WTC11 (cell line): ENCODE measurements at regions of chr10 and their contacts with region 1.

Region 1: DNA sequence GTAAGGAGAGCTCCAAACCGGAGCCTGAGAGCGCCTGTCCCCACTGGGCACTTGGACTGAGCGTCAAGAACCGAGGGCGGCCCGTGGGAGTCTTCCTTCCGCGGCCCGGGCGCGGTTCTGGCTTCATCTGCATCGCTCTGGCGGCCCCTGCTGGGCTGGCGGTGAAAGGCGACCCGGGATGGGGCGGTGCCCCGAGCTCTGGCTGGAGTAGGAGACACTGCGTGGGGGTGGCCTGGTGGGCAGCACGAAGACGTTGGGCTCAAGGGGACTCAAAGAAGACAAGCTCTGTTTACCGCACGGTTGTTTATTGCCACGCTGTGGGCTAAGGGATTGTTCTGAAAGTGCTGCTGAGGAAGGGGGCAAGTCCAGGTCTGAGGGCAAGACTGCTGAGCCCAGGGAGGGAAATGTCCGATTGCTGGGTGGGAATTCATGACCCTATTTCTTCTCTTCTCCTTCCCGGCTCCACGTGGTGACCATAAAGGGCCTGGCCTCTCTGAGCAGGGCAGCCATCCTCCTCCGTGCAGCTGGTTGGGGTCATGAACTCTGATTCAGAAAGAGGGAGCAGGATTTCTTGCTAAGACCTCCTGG is 29.8 kb downstream of the PLAU start:
- DNase-seq: peak; percentile 89
- ATAC-seq: peak; percentile 98
- H3K4me3 Mint-ChIP-seq: peak overlapping the region; percentile 33
- H3K27ac Mint-ChIP-seq: no peak overlapping the region
- H3K4me1 Mint-ChIP-seq: peaks cover 10% of the 10 kb centered on the region
- H3K27me3 Mint-ChIP-seq: peaks cover 7% of the 10 kb centered on the region
- CTCF ChIP-seq: peak; percentile 53

Region 2: DNA sequence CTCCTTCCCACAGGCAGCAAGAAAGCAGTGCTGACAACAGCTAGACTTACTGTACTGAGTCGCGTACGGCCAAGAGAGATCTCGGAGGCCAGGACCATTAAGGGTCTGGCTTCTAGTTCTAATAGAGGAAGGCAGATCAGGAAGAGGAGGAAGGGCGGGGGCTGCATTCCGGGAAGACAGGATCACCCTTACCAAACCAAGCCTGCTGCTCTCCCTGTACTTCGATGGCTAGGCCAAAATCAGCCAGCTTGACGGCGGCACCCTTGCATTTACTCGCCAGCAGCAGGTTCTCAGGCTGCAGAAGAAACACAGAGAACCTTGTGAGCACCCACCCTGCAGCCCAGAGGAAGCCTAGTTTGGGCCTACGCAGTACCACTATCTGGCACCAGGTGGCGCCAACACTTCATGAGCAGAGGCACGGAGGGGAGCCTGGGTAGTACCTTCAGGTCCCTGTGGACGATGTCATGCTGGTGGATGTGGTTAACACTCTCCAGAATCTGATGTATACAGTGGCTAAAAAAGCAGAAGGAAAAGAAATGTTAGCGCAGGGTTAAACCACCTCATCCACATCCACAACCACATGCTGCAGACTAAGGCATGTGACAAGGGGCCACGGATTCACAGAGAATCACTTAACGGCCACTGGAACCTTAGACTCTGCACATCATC is 91.8 kb before region 1 on chr10:
- CTCF ChIA-PET with region 1: interaction called, 25 read pairs
- POLR2A ChIA-PET with region 1: no interaction called
- DNase-seq: peak; percentile 93
- ATAC-seq: peak; percentile 91
- H3K4me3 Mint-ChIP-seq: no peak overlapping the region
- H3K27ac Mint-ChIP-seq: no peak overlapping the region
- H3K4me1 Mint-ChIP-seq: peaks cover 6% of the 10 kb centered on the region
- H3K27me3 Mint-ChIP-seq: no peaks in the 10 kb centered on the region
- CTCF ChIP-seq: peak; percentile 100

Region 3: GRCh38 chr10:73879296-73880173 is 61.2 kb before region 1 on chr10:
- CTCF ChIA-PET with region 1: interaction called, 24 read pairs
- POLR2A ChIA-PET with region 1: interaction called, 4 read pairs
- DNase-seq: peak; percentile 81
- ATAC-seq: peak; percentile 82
- H3K4me3 Mint-ChIP-seq: no peak overlapping the region
- H3K27ac Mint-ChIP-seq: 0 out of 2 replicates have a peak overlapping the region, but pooled peaks have one; percentile 35
- H3K4me1 Mint-ChIP-seq: peaks cover 23% of the 10 kb centered on the region
- H3K27me3 Mint-ChIP-seq: no peaks in the 10 kb centered on the region; the same call in 1 of the 2 replicates
- CTCF ChIP-seq: peak; percentile 77

Region 4: DNA sequence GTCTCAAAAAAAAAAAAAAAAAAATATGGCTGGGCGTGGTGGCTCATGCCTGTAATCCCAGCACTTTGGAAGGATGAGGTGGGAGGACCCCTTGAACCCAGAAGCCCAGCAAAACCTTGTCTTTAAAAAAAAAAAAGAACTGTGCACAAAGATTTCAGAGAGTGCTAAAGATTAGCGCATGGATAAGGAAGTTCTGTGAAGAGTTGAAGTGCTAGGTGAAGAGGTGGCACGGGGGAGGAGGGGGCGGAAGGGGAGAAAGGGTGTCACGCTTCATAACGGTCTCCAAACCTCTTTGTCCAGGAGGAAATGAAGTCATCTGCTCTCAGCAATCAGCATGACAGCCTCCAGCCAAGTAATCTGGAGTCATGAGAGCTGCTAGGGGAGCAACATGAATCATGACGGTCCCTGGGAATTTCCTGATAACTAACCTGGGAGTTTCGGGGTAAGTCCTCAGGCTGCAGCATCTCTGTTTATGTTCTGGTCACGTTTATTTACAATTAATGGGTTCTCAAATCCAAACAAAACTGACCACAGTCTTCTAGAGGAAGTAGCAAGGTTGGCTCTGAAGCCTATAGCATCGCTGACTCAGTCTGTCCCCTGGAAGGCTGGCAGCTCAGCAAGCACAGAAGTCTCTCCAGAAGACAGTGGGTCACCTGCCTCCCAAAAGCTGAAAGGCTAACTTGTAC is 31.7 kb before region 1 on chr10:
- CTCF ChIA-PET with region 1: interaction called, 13 read pairs
- POLR2A ChIA-PET with region 1: no interaction called
- DNase-seq: no peak
- ATAC-seq: no peak
- H3K4me3 Mint-ChIP-seq: no peak overlapping the region
- H3K27ac Mint-ChIP-seq: no peak overlapping the region
- H3K4me1 Mint-ChIP-seq: peaks cover 60% of the 10 kb centered on the region
- H3K27me3 Mint-ChIP-seq: peaks cover 46% of the 10 kb centered on the region
- CTCF ChIP-seq: no peak

Region 5: DNA sequence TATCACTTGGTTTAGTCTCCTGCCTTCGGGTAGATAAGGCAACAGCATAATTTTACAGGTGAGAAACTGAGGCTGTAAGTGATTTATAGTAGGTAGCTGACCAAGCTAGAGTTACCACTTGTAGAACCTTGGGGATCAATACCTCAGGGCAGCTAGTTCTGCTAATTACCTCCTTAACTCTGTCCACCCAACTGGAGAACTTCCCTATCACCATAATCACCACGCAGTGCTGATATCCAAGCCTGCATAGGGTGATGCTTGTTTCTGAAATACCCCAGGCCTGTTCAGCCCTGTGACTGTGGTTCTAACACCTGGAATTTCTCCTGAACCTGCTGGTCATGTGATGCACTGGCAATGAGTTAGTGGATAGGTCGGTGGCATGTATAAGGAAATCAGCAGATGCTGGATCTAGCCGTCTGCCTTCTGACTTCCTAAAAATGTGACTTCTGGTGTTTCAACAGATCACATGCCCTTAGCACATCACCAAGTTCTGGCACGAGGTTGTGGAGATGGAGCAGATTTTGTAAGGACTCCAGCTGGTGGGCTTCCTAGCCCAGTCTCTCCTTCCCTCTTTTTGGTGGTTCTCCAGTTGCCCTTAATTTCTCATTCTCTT is 14.5 kb before region 1 on chr10:
- CTCF ChIA-PET with region 1: interaction called, 20 read pairs
- POLR2A ChIA-PET with region 1: no interaction called
- DNase-seq: no peak
- ATAC-seq: no peak
- H3K4me3 Mint-ChIP-seq: no peak overlapping the region
- H3K27ac Mint-ChIP-seq: no peak overlapping the region
- H3K4me1 Mint-ChIP-seq: peaks cover 35% of the 10 kb centered on the region
- H3K27me3 Mint-ChIP-seq: no peaks in the 10 kb centered on the region; the same call in 1 of the 2 replicates
- CTCF ChIP-seq: no peak

Region 6: DNA sequence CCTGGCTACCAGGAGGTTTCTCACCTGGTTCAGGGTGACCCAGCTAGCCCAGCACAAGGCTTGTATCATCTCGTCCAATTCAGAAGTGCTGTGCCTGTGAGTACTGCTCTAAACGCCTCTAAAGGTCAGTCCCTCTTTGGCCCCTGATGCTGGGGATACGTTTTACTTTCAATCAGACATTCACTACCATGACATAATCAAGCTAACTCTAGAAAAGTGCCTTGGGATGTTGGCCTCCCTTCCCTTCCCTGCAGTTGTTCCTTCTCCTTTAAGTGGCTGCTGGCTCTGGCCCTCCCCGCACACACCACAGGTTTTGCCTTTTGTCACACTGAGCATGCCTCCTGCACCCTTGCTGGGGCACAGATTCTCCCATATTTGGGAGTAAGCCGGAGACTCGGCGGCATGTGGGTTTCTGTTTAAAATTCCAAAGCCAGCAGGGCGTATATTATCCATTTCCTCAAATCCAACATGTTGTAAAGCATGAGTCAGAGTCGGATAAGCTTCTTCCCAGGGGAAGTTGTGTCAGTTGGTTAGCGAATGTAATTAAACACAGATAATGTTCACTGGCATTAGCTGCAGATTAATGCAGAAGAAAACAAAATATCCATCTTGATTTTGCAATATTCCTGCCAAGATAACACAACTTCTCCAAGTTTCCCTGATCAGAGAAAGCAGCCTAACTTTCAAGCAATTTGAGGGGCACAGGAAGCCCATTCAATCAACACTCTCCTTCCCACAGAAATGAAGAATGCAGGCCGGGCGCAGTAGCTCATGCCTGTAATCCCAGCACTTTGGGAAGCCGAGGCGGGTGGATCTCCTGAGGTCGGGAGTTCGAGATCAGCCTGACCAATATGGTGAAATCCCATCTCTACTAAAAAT is 25.4 kb after region 1 on chr10:
- CTCF ChIA-PET with region 1: interaction called, 18 read pairs
- POLR2A ChIA-PET with region 1: interaction called, 5 read pairs
- DNase-seq: peak; percentile 86
- ATAC-seq: peak; percentile 87
- H3K4me3 Mint-ChIP-seq: peak overlapping the region; percentile 59
- H3K27ac Mint-ChIP-seq: peak overlapping the region; percentile 100
- H3K4me1 Mint-ChIP-seq: peaks cover 69% of the 10 kb centered on the region
- H3K27me3 Mint-ChIP-seq: no peaks in the 10 kb centered on the region
- CTCF ChIP-seq: no peak

Region 7: DNA sequence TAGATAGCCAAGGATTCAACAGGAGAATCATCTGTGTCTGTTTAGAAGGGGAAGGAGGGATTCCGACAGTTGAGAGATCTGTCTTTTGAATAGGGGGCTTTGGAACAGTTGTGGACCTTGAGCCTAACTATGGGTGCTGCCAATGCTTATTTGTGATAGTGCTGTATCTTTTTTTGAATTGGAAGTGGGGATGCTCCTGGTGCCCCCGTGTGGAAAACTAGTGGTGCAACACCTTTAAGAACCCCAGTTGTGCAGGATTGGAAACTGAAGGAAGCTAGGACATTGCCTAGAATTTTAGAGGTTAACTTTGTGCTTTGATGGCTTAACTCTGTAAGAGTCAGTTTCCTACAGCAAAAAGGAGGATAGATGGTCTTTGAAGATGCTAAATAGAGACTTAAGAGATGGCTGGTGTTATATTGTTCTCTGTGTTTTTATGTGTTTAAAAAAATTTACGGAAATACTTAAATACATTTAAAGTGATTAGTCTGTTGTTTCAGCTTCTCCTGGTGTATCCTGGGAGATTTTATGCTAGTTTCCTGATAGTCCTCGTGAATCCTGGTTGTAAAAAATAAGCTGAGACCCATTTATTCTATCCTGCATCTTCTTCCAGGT is 140.6 kb after region 1 on chr10:
- CTCF ChIA-PET with region 1: interaction called, 13 read pairs
- POLR2A ChIA-PET with region 1: no interaction called
- DNase-seq: peak; percentile 40
- ATAC-seq: peak; percentile 71
- H3K4me3 Mint-ChIP-seq: no peak overlapping the region
- H3K27ac Mint-ChIP-seq: peak overlapping the region; percentile 54; the same call in 1 of the 2 replicates
- H3K4me1 Mint-ChIP-seq: peaks cover 52% of the 10 kb centered on the region
- H3K27me3 Mint-ChIP-seq: no peaks in the 10 kb centered on the region
- CTCF ChIP-seq: peak; percentile 59

Region 8: GRCh38 chr10:74113546-74113945 is 172.8 kb after region 1 on chr10:
- CTCF ChIA-PET with region 1: no interaction called
- POLR2A ChIA-PET with region 1: no interaction called
- DNase-seq: no peak
- ATAC-seq: no peak
- H3K4me3 Mint-ChIP-seq: no peak overlapping the region
- H3K27ac Mint-ChIP-seq: no peak overlapping the region
- H3K4me1 Mint-ChIP-seq: no peaks in the 10 kb centered on the region
- H3K27me3 Mint-ChIP-seq: no peaks in the 10 kb centered on the region
- CTCF ChIP-seq: no peak

Region 9: GRCh38 chr10:74151056-74151878 is 210.5 kb after region 1 on chr10 and contains the start of gene ADK:
- CTCF ChIA-PET with region 1: no interaction called
- POLR2A ChIA-PET with region 1: no interaction called
- DNase-seq: peak; percentile 100
- ATAC-seq: peak; percentile 89
- H3K4me3 Mint-ChIP-seq: no peak within 1 kb of the TSS
- H3K27ac Mint-ChIP-seq: peak within 1 kb of the TSS; percentile 72; the same call in 1 of the 2 replicates
- H3K4me1 Mint-ChIP-seq: peaks cover 14% of the 10 kb centered on the region
- H3K27me3 Mint-ChIP-seq: no peaks in the 10 kb centered on the region
- CTCF ChIP-seq: no peak
- total RNA-seq, gene ADK: 30.2 to 32.7 TPM (median 32.5 TPM) in 3 replicates